ENCODE measurements at regions of chr7 and their contacts with region 1.

Region 1: GRCh38 chr7:22103255-22103969 is 157.7 kb upstream of the CDCA7L start:
- DNase-seq: peak; percentile 88
- H3K4me3 Mint-ChIP-seq: no peak overlapping the region
- H3K27ac Mint-ChIP-seq: no peak overlapping the region
- H3K4me1 Mint-ChIP-seq: peaks cover 3% of the 10 kb centered on the region
- H3K27me3 Mint-ChIP-seq: peaks cover 12% of the 10 kb centered on the region

Region 2: GRCh38 chr7:22082886-22083703 is 20.3 kb before region 1 on chr7:
- intact Hi-C with region 1: no loop called
- DNase-seq: peak; percentile 94
- H3K4me3 Mint-ChIP-seq: peak overlapping the region; percentile 78
- H3K27ac Mint-ChIP-seq: no peak overlapping the region
- H3K4me1 Mint-ChIP-seq: peaks cover 10% of the 10 kb centered on the region
- H3K27me3 Mint-ChIP-seq: peaks cover 43% of the 10 kb centered on the region

Region 3: DNA sequence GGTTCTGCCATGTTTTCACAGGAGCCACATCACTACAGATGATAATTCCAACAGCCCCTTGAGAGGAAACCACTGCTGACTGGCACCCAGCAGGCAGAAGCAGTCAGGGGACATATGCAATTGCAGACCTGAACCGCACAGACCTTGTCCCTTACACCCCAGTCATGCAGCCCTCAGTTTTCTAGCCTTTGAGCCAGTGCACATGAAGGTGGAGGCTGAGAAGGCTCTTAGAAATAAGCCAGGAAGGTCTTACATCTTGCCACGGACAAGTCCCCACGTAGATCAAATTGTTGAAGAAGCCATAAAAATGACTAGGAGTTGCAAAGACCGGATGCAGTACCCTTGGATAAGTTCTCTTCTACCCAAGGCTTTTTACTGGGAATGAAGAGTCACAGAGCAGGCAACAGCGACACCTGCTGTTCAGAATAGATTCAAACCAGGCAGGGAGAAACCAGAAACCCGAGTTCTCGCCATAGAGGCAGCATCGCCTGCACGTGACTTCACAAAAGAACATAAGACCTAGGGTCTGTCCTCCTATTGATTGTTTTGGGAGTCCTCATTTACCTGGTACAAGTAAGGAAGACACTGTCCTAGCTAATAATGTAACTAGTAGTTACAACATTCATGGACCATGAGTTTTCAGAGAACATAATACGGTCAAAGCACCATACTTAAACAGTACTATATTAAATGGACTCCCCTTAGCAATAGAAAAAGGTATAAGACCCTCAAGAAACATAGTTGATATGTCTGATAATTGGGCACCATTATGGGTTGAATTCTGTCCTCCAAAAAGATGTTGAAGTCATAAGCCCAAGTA is 385.4 kb after region 1 on chr7:
- intact Hi-C with region 1: loop called (anchors 1 kb)
- DNase-seq: peak; percentile 89
- H3K4me3 Mint-ChIP-seq: no peak overlapping the region
- H3K27ac Mint-ChIP-seq: no peak overlapping the region
- H3K4me1 Mint-ChIP-seq: peaks cover 2% of the 10 kb centered on the region
- H3K27me3 Mint-ChIP-seq: peaks cover 20% of the 10 kb centered on the region

Region 4: DNA sequence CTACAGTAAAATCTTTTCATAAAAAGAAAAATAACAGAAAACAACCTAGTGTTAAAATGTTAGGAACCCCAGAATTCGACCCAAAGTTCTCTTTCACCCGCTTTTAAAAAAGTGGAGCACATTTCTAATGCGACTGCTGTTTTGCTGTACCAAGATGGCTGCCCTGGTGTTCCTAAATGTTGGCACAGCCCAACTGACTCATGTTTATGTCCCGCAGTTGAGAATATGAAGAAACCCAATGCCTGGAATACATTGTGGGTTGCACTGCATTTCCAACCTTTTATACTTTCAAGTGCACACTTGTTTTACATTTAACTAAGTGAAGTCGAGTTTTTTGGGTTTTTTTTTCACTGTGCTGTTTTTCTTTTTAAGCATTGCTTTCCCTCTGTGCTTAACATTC is 395.6 kb after region 1 on chr7:
- intact Hi-C with region 1: loop called (anchors 2 kb)
- DNase-seq: peak; percentile 22
- H3K4me3 Mint-ChIP-seq: no peak overlapping the region
- H3K27ac Mint-ChIP-seq: no peak overlapping the region
- H3K4me1 Mint-ChIP-seq: peaks cover 3% of the 10 kb centered on the region
- H3K27me3 Mint-ChIP-seq: peaks cover 37% of the 10 kb centered on the region

Measured in activated CD4-positive, alpha-beta T cell treated with anti-CD3 and anti-CD28 coated beads, Interleukin-2, amount 10 ng/mL, durations not matched to agents 24 days and 14 days (primary cell).